Left ventricle myocardium inferior (tissue), 1 donor: ENCODE measurements at regions of chr11 and their contacts with region 1.

Region 1: DNA sequence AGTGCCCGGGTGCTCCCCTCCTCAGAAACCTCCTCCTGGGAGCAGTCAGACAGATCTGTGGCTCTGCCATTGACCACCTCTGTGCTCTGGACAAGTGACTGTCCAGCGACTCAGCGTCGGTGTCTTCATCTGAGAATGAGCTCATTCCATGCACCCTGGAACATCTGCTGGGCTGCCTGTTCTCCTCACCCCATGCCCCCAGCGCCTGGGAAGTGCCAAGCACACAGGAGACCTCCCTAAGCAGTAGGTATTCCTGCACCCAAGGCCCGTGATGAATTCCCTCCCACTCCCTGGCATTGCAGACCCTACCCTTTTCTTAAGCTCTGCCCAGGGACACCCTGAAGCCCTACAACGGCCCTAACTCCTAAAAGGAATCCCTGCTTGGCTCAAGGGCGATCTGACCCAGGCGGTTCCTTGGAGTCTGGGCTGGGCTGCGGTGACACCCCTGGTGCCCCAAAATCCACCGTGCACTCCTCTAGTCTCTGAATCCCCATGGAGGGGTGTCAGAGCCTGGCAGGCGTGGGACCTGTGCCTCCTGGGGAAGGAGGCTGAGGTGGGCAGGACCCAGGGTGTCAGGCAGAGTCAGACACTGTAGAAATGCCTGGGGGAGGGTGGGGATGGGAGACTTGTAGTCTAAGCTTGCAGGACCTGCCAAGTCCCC is 92.0 kb downstream of the CEP164 start:
- DNase-seq: no peak
- H3K4me3 ChIP-seq: no peak overlapping the region
- H3K27ac ChIP-seq: no peak overlapping the region
- H3K4me1 ChIP-seq: no peaks in the 10 kb centered on the region
- H3K27me3 ChIP-seq: peaks cover 49% of the 10 kb centered on the region
- CTCF ChIP-seq: no peak

Region 2: GRCh38 chr11:117473481-117474096 is 54.0 kb after region 1 on chr11:
- intact Hi-C with region 1: no loop called
- DNase-seq: no peak
- H3K4me3 ChIP-seq: no peak overlapping the region
- H3K27ac ChIP-seq: no peak overlapping the region
- H3K4me1 ChIP-seq: no peaks in the 10 kb centered on the region
- H3K27me3 ChIP-seq: no peaks in the 10 kb centered on the region
- CTCF ChIP-seq: no peak

Region 3: GRCh38 chr11:117817368-117818040 is 397.9 kb after region 1 on chr11:
- intact Hi-C with region 1: loop called (anchors 5 kb)
- DNase-seq: peak; percentile 82
- H3K4me3 ChIP-seq: peak overlapping the region; percentile 36
- H3K27ac ChIP-seq: peak overlapping the region; percentile 49
- H3K4me1 ChIP-seq: peaks cover 46% of the 10 kb centered on the region
- H3K27me3 ChIP-seq: peaks cover 2% of the 10 kb centered on the region
- CTCF ChIP-seq: peak; percentile 99